T-cell (primary cell): ENCODE measurements at regions of chr18 and their contacts with region 1.

Region 1: GRCh38 chr18:69636529-69637301 is 236.0 kb downstream of the DOK6 start:
- DNase-seq: peak in 24 of 35 experiments; percentile 1 to 47 (median 10)
- ATAC-seq: peak in 3 of 4 experiments; percentile 68 to 74 (median 69)
- H3K4me3 ChIP-seq: no peak overlapping the region
- H3K4me3 Mint-ChIP-seq: no peak overlapping the region
- H3K27ac ChIP-seq: no peak overlapping the region
- H3K27ac Mint-ChIP-seq: no peak overlapping the region
- H3K4me1 ChIP-seq: no peaks in the 10 kb centered on the region
- H3K4me1 Mint-ChIP-seq: peaks cover 0 to 5% (median 4%) of the 10 kb centered on the region in 3 donors
- H3K27me3 ChIP-seq: no peaks in the 10 kb centered on the region
- H3K27me3 Mint-ChIP-seq: peaks cover 0 to under 1% of the 10 kb centered on the region in 2 donors

Region 2: DNA sequence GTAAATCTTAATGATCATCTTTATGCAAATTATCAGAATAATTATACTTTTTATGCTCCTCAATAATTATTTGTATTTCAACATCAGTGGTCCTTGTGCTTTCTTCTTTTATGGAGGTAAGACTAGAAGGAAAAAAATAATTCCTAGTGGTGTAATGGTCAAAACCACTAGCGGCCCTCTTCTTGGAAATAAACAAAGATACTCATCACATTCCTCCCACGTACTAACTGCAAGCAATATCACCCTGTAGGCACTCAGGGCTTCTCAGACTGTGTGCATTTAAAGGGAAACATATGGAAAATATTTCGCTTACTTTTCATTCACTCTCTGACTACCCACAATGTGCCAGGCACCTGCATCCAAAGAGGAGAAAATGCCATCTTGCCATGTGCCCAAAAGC is 27.7 kb after region 1 on chr18:
- CTCF ChIA-PET with region 1: no interaction called
- POLR2A ChIA-PET with region 1: no interaction called
- DNase-seq: no peak
- ATAC-seq: no peak
- H3K4me3 ChIP-seq: no peak overlapping the region
- H3K4me3 Mint-ChIP-seq: no peak overlapping the region
- H3K27ac ChIP-seq: no peak overlapping the region
- H3K27ac Mint-ChIP-seq: no peak overlapping the region
- H3K4me1 ChIP-seq: no peaks in the 10 kb centered on the region
- H3K4me1 Mint-ChIP-seq: no peaks in the 10 kb centered on the region
- H3K27me3 ChIP-seq: no peaks in the 10 kb centered on the region
- H3K27me3 Mint-ChIP-seq: peaks cover 0 to 16% of the 10 kb centered on the region in 2 donors

Region 3: DNA sequence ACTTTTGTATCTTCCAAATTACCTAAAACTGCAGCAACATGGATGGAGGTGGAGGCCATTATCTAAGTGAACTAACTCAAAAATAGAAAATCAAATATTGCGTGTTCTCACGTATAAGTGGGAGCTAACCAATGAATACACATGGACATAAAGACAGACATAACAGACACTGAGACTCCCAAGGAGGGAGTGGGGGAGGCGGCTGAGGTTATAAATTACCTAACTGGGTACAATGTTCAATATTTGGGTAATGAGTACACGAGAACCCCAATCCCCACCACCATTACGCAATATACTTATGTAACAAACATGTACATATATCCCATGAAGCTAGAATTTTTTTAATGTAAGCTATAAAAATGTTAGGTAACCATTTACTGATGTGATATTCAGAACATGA is 448.9 kb after region 1 on chr18:
- CTCF ChIA-PET with region 1: interaction called, 8 to 11 read pairs
- POLR2A ChIA-PET with region 1: no interaction called
- DNase-seq: no peak
- ATAC-seq: no peak
- H3K4me3 ChIP-seq: no peak overlapping the region
- H3K4me3 Mint-ChIP-seq: no peak overlapping the region
- H3K27ac ChIP-seq: no peak overlapping the region
- H3K27ac Mint-ChIP-seq: no peak overlapping the region
- H3K4me1 ChIP-seq: no peaks in the 10 kb centered on the region
- H3K4me1 Mint-ChIP-seq: no peaks in the 10 kb centered on the region
- H3K27me3 ChIP-seq: no peaks in the 10 kb centered on the region
- H3K27me3 Mint-ChIP-seq: no peaks in the 10 kb centered on the region